Calu3 (cell line): ENCODE measurements at regions of chr1 and their contacts with region 1.

Region 1: GRCh38 chr1:116997066-116997465 is 4.5 kb upstream of the CD101 start:
- DNase-seq: no peak
- H3K4me3 Mint-ChIP-seq: no peak overlapping the region
- H3K27ac Mint-ChIP-seq: peak overlapping the region; percentile 50
- H3K4me1 Mint-ChIP-seq: peaks cover 30% of the 10 kb centered on the region
- H3K27me3 Mint-ChIP-seq: no peaks in the 10 kb centered on the region
- CTCF ChIP-seq: no peak

Region 2: DNA sequence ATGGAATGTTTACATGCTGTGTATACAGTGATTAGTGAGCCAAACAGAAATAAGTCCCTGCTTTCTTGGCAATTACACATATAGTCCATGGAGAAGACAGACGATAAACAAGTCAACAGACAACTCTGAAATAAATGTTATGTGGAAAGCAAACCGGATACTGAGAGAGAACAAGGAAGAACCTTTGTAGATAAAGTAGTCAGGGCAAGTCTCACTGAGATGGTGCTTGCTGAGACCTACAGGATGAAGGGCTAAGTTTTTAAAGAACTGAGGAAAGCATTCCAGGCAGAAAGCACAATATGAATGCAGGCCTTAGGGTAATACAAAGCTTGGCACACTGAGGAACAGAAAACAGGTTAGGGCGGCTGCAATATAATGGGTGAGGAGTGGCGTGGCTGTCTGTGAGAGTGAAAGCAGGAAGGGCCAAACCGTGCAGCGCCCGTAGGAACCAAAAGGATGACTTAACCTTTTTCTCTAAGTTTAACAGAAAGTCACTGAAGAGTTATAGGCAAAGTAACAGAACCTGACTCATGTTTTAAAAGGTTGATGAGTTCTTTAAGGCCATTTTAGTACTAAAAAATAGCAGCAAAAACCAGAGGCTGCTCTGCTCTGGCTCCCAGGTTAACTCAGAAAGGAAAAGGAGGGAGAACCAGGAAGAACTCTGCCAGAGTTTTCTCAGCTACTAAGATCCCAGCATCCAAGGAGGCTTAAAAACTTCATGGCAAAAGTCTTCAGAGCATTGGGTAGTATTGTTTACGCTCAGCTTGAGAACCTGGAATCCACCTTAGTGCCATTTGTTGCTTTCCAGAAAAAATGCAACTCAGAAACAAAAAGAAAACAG is 54.4 kb after region 1 on chr1:
- CTCF ChIA-PET with region 1: no interaction called
- intact Hi-C with region 1: loop called (anchors 5 kb)
- DNase-seq: peak; percentile 11
- H3K4me3 Mint-ChIP-seq: peak overlapping the region; percentile 54
- H3K27ac Mint-ChIP-seq: peak overlapping the region; percentile 46
- H3K4me1 Mint-ChIP-seq: peaks cover 20% of the 10 kb centered on the region
- H3K27me3 Mint-ChIP-seq: no peaks in the 10 kb centered on the region
- CTCF ChIP-seq: no peak

Region 3: DNA sequence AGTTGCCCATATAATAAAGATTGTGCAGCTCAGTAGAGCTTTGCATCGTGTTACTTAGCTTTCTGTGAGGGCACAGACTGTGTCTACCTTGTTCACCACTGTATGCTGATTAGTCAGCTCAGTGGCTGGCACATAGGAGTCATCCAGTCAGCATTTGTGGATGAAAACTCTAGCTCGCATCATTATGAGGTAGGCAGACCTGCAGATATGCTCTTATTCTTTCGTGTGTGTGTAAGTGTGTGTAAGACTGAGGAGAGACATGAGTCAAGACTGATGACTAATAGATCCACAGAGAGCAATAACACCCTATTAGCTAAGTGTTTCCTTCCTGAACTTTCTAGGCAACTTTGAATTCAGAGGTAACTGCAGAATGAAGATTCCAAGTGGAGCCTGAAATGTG is 80.2 kb after region 1 on chr1:
- CTCF ChIA-PET with region 1: no interaction called
- intact Hi-C with region 1: no loop called
- DNase-seq: no peak
- H3K4me3 Mint-ChIP-seq: no peak overlapping the region
- H3K27ac Mint-ChIP-seq: no peak overlapping the region
- H3K4me1 Mint-ChIP-seq: no peaks in the 10 kb centered on the region
- H3K27me3 Mint-ChIP-seq: no peaks in the 10 kb centered on the region
- CTCF ChIP-seq: no peak

Region 4: GRCh38 chr1:117284399-117285215 is 287.5 kb after region 1 on chr1:
- CTCF ChIA-PET with region 1: no interaction called
- intact Hi-C with region 1: no loop called
- DNase-seq: peak; percentile 17
- H3K4me3 Mint-ChIP-seq: no peak overlapping the region
- H3K27ac Mint-ChIP-seq: no peak overlapping the region
- H3K4me1 Mint-ChIP-seq: peaks cover 8% of the 10 kb centered on the region
- H3K27me3 Mint-ChIP-seq: no peaks in the 10 kb centered on the region
- CTCF ChIP-seq: peak; percentile 45